ENCODE measurements at regions of chr17 and their contacts with region 1.

Region 1: GRCh38 chr17:8151123-8151640 is 1.0 kb downstream of the PER1 start:
- DNase-seq: peak; percentile 92
- H3K4me3 Mint-ChIP-seq: peak overlapping the region; percentile 83
- H3K27ac Mint-ChIP-seq: no peak overlapping the region
- H3K4me1 Mint-ChIP-seq: peaks cover 35% of the 10 kb centered on the region
- H3K27me3 Mint-ChIP-seq: no peaks in the 10 kb centered on the region

Region 2: DNA sequence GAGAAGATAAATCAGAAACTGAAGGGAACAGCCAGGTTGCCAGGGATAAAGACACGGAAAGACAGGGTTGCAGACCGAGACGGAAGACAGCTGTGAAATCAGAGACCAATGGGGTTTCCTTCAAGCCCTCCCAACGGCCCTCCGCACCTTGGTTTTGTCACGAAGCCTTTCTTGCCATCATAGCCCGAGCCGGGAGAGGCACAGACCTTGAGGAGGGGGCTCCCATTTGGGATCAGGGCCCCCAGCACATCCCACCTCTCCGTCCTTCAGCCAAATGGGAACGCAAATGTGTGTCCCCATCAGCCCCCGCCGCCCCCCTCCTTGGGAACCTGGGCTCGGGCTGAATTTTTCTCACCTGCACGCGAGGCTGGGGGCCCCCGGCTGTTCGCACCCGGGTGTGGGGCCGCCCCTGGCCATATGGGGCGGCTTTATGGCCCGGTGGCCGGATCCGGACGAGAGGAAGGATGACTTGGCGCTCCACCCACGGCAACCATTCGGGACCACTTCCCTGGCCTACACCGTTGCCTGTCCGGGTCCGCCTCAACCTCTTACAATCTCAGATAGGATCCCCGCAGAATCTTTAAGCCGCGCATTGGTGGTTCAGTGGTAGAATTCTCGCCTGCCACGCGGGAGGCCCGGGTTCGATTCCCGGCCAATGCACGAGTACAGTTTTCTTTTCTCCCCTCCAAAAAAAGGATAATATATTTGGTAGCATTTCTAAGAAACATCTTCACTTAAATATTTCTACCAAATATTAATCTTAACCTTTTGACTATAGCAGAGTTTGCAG is 25.8 kb before region 1 on chr17:
- CTCF ChIA-PET with region 1: interaction called, 62 read pairs
- POLR2A ChIA-PET with region 1: interaction called, 4 read pairs
- intact Hi-C with region 1: loop called (anchors 1 kb)
- DNase-seq: peak; percentile 94
- H3K4me3 Mint-ChIP-seq: peak overlapping the region; percentile 83
- H3K27ac Mint-ChIP-seq: peak overlapping the region; percentile 89
- H3K4me1 Mint-ChIP-seq: peaks cover 50% of the 10 kb centered on the region
- H3K27me3 Mint-ChIP-seq: peaks cover 37% of the 10 kb centered on the region

Region 3: DNA sequence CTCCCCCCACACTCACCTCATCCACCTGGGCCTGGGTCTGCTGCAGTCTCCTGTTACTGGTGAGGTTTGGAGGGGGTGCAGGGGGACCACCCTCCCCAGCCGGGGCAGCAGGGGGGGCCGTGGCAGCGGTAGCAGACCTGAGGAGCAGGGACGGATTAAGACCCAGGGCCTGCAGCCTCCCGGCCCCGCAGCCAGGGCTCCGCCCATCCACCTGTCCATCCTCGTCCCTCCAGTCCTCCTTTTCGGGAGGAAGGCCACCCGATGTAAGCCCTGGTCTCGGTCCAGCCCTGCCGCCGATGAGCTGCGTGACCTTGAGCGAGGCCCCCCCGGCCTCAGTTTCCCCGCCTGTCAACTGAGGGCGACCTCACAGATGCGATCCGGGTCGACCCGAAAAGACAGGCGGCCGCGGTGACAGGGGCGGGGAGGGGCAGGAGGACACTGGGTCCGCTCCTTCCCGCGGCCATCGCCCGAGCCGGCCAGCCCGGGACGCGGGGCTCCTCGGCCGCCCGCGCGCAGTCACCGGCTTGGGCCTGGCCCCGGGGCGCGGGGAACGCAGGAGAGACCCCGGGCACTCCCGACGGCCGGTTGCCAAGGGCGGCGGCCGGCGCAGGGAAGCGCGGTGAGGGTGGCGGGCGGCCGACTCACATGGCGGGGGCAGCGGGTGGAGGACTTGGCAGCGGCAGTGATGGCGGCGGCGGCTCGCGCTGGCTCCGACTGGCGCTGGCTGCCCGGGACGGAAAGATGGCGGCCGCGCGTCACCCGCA is 11.2 kb after region 1 on chr17 and contains the start of gene VAMP2:
- CTCF ChIA-PET with region 1: interaction called, 5 read pairs
- POLR2A ChIA-PET with region 1: interaction called, 16 read pairs
- intact Hi-C with region 1: loop called (anchors 1 kb)
- DNase-seq: peak; percentile 88
- H3K4me3 Mint-ChIP-seq: peak within 1 kb of the TSS; percentile 86
- H3K27ac Mint-ChIP-seq: peak within 1 kb of the TSS; percentile 95
- H3K4me1 Mint-ChIP-seq: peaks cover 52% of the 10 kb centered on the region
- H3K27me3 Mint-ChIP-seq: no peaks in the 10 kb centered on the region
- total RNA-seq, gene VAMP2: 30.1 to 30.4 TPM

Measured in activated CD4-positive, alpha-beta memory T cell treated with anti-CD3 and anti-CD28 coated beads for 36 hours (primary cell).